MCF 10A (cell line): ENCODE measurements at regions of chr9 and their contacts with region 1.

Region 1: GRCh38 chr9:121463026-121463807 is 36.4 kb downstream of the GGTA1 start:
- DNase-seq: peak; percentile 45
- H3K4me3 Mint-ChIP-seq: no peak overlapping the region
- H3K27ac Mint-ChIP-seq: no peak overlapping the region
- H3K4me1 Mint-ChIP-seq: no peaks in the 10 kb centered on the region
- H3K27me3 Mint-ChIP-seq: peaks cover 60% of the 10 kb centered on the region
- CTCF ChIP-seq: peak; percentile 45

Region 2: DNA sequence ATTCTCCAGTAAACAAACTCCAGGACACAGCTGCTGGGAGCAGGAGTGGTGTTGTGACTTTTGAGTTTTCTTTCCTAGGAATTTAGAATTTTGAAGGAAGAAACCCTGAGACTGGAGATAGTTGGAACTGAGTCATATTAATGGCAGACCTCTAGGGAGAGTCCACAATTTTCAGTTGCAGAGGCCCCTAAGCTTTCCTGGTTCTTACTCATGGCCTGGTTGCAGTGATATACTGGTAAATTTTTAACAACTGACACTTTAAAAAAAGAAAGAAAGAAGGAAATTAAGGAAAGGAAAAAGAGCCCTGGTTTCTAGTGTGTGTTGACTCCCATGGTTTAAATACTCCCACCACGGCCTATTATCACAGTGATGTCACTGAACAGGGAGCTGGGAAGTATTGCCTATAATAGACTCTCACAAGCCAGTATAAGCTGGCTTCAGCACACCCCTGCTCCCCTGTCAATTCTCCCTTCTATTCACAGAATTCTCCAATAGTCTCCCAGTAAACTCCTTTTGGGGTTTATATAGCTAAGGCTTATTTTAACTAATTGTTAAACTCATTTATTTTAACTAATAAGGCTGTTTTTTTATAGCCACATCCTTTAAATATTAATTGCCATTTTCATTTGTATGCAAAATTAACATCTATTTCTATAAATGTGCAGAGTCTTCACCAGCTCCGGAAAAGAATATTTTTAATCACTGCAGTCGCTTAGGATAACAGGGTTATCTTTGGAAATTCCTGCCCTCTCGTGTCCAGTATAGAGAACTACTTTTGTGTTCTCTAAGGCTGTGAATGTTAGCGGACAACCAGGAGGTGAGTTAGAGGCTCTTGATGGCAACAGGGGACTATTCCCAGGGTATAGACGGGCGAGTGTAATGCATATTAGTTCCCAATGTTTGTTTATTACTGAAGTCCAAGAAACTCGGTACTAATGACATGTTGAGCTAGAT is 23.2 kb before region 1 on chr9:
- CTCF ChIA-PET with region 1: interaction called, 34 read pairs
- POLR2A ChIA-PET with region 1: no interaction called
- intact Hi-C with region 1: no loop called
- DNase-seq: peak; percentile 17
- H3K4me3 Mint-ChIP-seq: no peak overlapping the region
- H3K27ac Mint-ChIP-seq: no peak overlapping the region
- H3K4me1 Mint-ChIP-seq: no peaks in the 10 kb centered on the region
- H3K27me3 Mint-ChIP-seq: peaks cover 26% of the 10 kb centered on the region
- CTCF ChIP-seq: peak; percentile 15

Region 3: DNA sequence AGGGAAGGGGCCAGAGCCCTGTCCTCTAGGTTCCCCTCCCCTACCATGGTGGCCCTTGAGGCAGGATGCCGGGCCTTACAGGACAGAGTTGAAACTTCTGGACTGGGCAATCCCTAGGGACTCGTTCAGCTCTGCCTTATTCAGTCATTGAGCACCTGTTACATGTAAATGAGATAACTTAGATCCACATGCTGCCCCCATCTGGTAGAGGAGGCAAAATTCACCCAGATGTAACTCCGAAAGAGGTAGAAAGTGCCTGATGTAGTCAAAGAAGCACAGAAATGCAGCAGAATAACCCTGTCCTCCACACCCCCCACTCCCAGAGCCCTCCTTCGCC is 34.9 kb after region 1 on chr9:
- CTCF ChIA-PET with region 1: interaction called, 3 read pairs
- POLR2A ChIA-PET with region 1: no interaction called
- intact Hi-C with region 1: loop called (anchors 2 kb)
- DNase-seq: peak; percentile 87
- H3K4me3 Mint-ChIP-seq: peak overlapping the region; percentile 73
- H3K27ac Mint-ChIP-seq: peak overlapping the region; percentile 35
- H3K4me1 Mint-ChIP-seq: peaks cover 18% of the 10 kb centered on the region
- H3K27me3 Mint-ChIP-seq: peaks cover 13% of the 10 kb centered on the region
- CTCF ChIP-seq: peak; percentile 46

Region 4: GRCh38 chr9:121538246-121538645 is 75.0 kb after region 1 on chr9:
- CTCF ChIA-PET with region 1: no interaction called
- POLR2A ChIA-PET with region 1: no interaction called
- intact Hi-C with region 1: loop called (anchors 2 kb)
- DNase-seq: peak; percentile 41
- H3K4me3 Mint-ChIP-seq: no peak overlapping the region
- H3K27ac Mint-ChIP-seq: no peak overlapping the region
- H3K4me1 Mint-ChIP-seq: no peaks in the 10 kb centered on the region
- H3K27me3 Mint-ChIP-seq: peaks cover 5% of the 10 kb centered on the region
- CTCF ChIP-seq: peak; percentile 11

Region 5: GRCh38 chr9:121822093-121823085 is 359.2 kb after region 1 on chr9:
- CTCF ChIA-PET with region 1: no interaction called
- POLR2A ChIA-PET with region 1: no interaction called
- intact Hi-C with region 1: no loop called
- DNase-seq: no peak
- H3K4me3 Mint-ChIP-seq: no peak overlapping the region
- H3K27ac Mint-ChIP-seq: peak overlapping the region; percentile 3
- H3K4me1 Mint-ChIP-seq: no peaks in the 10 kb centered on the region
- H3K27me3 Mint-ChIP-seq: no peaks in the 10 kb centered on the region
- CTCF ChIP-seq: no peak